ENCODE measurements at regions of chr3 and their contacts with region 1.

Region 1: DNA sequence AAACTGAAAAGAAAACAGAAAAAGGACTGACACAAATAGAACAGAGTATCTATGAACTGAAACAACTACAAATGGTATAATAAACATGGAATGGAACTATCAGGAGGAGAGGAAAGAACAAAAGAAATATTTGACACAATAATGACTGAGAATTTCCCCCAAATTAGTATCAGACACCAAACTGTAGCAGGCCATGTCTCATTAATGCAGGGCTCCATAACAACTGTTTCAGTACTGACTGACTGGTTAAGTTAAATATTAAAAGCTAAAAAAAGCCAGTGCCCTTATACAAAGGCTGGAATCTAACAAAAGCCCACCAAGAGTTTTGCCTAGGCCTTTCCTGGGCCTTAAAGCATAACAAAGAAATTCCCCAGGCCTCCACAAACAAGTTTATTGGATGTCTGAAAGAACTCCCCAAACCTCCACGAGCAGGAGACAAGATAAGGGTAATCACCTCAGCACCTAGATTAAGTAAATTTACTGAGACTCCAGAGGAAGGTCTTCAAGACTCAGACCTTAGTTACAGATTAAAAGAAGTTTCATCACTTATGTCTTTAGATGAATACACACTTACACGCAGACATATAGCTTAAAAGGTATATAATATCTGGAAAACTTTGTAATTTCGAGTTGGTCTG is 45.7 kb downstream of the KPNA1 start:
- DNase-seq: no peak
- H3K4me3 ChIP-seq: no peak overlapping the region
- H3K27ac ChIP-seq: no peak overlapping the region
- H3K27me3 ChIP-seq: no peaks in the 10 kb centered on the region
- CTCF ChIP-seq: no peak

Region 2: DNA sequence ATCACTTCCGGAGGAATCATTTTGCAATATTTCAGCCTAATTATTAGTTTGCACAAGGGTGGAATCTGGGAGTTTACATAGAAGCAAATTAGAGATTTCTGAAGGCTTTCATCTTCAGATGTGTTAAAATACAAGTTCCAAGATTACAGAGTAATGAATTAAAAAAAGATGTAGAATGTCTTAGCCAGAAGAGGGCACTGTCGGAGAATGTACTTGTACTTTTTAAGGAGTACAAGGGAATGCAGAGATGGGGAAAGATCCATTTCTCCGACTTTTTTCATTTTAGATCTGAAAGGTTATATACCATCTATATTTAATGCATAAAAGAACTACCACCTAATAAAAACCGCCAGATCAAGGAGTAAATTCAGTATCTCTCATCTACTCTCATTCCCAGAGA is 10.0 kb before region 1 on chr3:
- CTCF ChIA-PET with region 1: interaction called, 10 read pairs
- POLR2A ChIA-PET with region 1: no interaction called
- DNase-seq: peak; percentile 27
- H3K4me3 ChIP-seq: no peak overlapping the region
- H3K27ac ChIP-seq: no peak overlapping the region
- H3K27me3 ChIP-seq: no peaks in the 10 kb centered on the region
- CTCF ChIP-seq: peak; percentile 57

Region 3: DNA sequence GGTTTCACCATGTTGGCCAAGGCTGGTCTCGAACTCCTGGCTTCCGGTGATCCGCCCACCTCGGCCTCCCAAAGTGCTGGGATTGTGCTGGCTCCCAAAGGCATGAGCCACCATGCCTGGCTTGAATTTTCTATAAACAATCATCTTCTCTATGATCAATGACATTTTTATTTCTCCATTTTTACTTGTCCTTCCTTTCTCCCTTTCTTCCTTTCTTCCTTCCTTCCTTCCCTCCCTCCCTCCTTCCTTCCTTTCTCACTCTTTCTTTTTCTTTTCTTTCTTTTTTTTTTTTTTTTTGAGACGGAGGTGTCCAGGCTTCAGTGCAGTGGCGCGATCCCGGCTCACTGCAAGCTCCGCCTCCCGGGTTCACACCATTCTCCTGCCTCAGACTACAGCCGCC is 54.3 kb after region 1 on chr3:
- CTCF ChIA-PET with region 1: no interaction called
- POLR2A ChIA-PET with region 1: no interaction called
- DNase-seq: no peak
- H3K4me3 ChIP-seq: no peak overlapping the region
- H3K27ac ChIP-seq: no peak overlapping the region
- H3K27me3 ChIP-seq: no peaks in the 10 kb centered on the region
- CTCF ChIP-seq: no peak

Measured in AG04450 (cell line).